ENCODE measurements at regions of chr5 and their contacts with region 1.

Region 1: GRCh38 chr5:132767150-132767549 is 9.9 kb downstream of the SEPTIN8 start:
- DNase-seq: no peak
- ATAC-seq: no peak
- H3K4me3 ChIP-seq: no peak overlapping the region
- H3K27ac ChIP-seq: no peak overlapping the region
- H3K4me1 ChIP-seq: no peaks in the 10 kb centered on the region
- CTCF ChIP-seq: no peak
- EP300 ChIP-seq: no peak
- POLR2A ChIP-seq: no peak
- RAD21 ChIP-seq: no peak

Region 2: DNA sequence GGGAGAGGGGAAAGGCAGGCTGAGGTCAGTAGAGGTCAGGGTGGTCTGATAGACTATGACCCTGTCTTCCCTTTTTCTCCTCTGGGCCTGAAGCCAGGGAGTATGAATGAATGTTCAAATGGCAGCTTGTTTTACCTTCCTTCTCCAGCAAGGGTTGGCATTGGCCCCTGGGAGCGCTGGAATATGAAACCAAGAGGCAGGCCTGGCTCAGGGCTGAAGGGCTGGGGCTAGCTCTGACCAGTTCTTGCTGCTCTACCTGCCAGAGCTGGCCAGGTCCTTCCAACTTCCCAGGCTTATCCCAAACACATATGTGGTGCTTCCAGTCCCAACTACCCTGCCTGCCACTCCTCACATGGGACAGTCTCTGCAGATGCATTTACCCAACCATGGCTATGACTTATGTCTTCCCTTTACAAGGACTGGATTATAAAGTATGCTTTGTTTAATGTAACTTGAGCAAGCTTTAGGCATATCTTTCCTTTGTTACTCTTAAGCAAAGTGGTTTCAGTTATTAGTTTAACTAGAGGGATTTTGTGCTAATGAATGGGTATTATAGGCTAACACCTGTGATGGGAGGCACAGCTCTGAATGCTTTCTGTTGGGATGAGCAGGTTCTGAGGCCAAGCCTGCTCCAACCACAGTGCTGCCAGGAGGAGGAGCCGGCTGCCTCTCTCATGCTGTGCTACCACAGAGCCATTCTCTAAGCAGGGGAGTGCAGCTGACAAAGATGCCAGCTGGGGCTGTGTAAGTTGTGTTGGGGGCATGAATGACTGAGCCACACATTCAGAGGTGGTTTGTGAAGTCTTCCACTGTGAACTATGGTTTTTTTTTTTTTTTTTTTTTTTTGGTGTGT is 13.8 kb before region 1 on chr5:
- CTCF ChIA-PET with region 1: interaction called, 18 read pairs
- POLR2A ChIA-PET with region 1: no interaction called
- DNase-seq: peak in 1 of 2 experiments; percentile 18
- ATAC-seq: peak; percentile 64 to 80; a peak in 5 of 6 replicates
- H3K4me3 ChIP-seq: no peak overlapping the region
- H3K27ac ChIP-seq: no peak overlapping the region
- H3K4me1 ChIP-seq: no peaks in the 10 kb centered on the region
- CTCF ChIP-seq: no peak
- EP300 ChIP-seq: no peak
- POLR2A ChIP-seq: no peak
- RAD21 ChIP-seq: no peak